Naive thymus-derived CD4-positive, alpha-beta T cell (primary cell): ENCODE measurements at regions of chr2 and their contacts with region 1.

Region 1: DNA sequence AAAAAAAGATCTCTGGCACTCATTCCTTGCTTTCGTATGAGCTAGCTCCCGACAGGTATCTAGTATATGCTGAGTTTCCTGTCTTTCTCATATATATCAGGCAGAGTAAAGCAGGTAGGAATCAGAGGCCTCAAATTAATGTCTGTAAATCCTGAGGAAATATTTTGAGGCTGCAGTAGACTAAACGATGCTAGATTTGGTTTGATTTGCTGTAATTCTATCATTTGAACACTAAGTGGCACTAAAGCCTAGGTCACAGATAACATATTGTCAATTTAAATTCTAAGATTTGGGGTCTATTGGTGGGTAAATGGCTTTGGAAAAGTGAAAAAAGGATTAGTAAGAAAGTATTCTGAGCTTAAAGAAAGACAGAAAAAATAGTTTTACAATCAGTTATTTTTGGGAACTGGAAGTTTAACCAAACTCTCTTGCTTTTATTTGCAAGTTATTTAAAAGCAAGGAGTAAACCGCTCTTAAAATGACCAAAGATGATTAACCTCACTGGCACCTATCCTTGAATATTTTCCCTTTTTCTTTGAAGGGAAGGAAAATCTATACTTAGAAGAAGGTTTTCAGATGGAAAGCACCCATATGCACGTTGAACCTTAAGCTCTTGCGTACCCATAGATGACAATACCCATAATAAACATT is 37.6 kb upstream of the SLC4A10 start:
- DNase-seq: peak in 6 of 9 donors; percentile 3 to 30 (median 18)
- ATAC-seq: peak; percentile 44
- H3K4me3 ChIP-seq: no peak overlapping the region
- H3K4me3 Mint-ChIP-seq: no peak overlapping the region
- H3K27ac ChIP-seq: no peak overlapping the region
- H3K27ac Mint-ChIP-seq: no peak overlapping the region
- H3K4me1 ChIP-seq: no peaks in the 10 kb centered on the region
- H3K4me1 Mint-ChIP-seq: peaks cover 0 to 3% (median 0%) of the 10 kb centered on the region in 7 donors
- H3K27me3 ChIP-seq: no peaks in the 10 kb centered on the region
- H3K27me3 Mint-ChIP-seq: peaks cover 0 to 27% (median 5%) of the 10 kb centered on the region in 5 donors

Region 2: GRCh38 chr2:159946326-159946999 is 1640.2 kb before region 1 on chr2:
- CTCF ChIA-PET with region 1: no interaction called
- POLR2A ChIA-PET with region 1: no interaction called
- intact Hi-C with region 1: no loop called
- DNase-seq: no peak
- ATAC-seq: no peak
- H3K4me3 ChIP-seq: no peak overlapping the region
- H3K4me3 Mint-ChIP-seq: no peak overlapping the region
- H3K27ac ChIP-seq: no peak overlapping the region
- H3K27ac Mint-ChIP-seq: no peak overlapping the region
- H3K4me1 ChIP-seq: no peaks in the 10 kb centered on the region
- H3K4me1 Mint-ChIP-seq: no peaks in the 10 kb centered on the region
- H3K27me3 ChIP-seq: no peaks in the 10 kb centered on the region
- H3K27me3 Mint-ChIP-seq: peaks cover 5 to 13% (median 11%) of the 10 kb centered on the region in 5 donors

Region 3: GRCh38 chr2:160721089-160722040 is 865.3 kb before region 1 on chr2:
- CTCF ChIA-PET with region 1: no interaction called
- POLR2A ChIA-PET with region 1: no interaction called
- intact Hi-C with region 1: no loop called
- DNase-seq: no peak
- ATAC-seq: no peak
- H3K4me3 ChIP-seq: no peak overlapping the region
- H3K4me3 Mint-ChIP-seq: no peak overlapping the region
- H3K27ac ChIP-seq: no peak overlapping the region
- H3K27ac Mint-ChIP-seq: no peak overlapping the region
- H3K4me1 ChIP-seq: no peaks in the 10 kb centered on the region
- H3K4me1 Mint-ChIP-seq: peaks cover 0 to 3% (median 0%) of the 10 kb centered on the region in 7 donors
- H3K27me3 ChIP-seq: no peaks in the 10 kb centered on the region
- H3K27me3 Mint-ChIP-seq: peaks cover 0 to 4% (median 0%) of the 10 kb centered on the region in 5 donors

Region 4: GRCh38 chr2:161946489-161947107 is 360.0 kb after region 1 on chr2:
- CTCF ChIA-PET with region 1: interaction called, 33 read pairs
- POLR2A ChIA-PET with region 1: no interaction called
- intact Hi-C with region 1: loop called (anchors 1 kb)
- DNase-seq: peak in 4 of 9 donors; percentile 18 to 38 (median 28)
- ATAC-seq: no peak
- H3K4me3 ChIP-seq: no peak overlapping the region
- H3K4me3 Mint-ChIP-seq: no peak overlapping the region
- H3K27ac ChIP-seq: no peak overlapping the region
- H3K27ac Mint-ChIP-seq: no peak overlapping the region
- H3K4me1 ChIP-seq: peaks cover 0 to 9% of the 10 kb centered on the region in 2 donors
- H3K4me1 Mint-ChIP-seq: peaks cover 0 to 36% (median 3%) of the 10 kb centered on the region in 7 donors
- H3K27me3 ChIP-seq: no peaks in the 10 kb centered on the region
- H3K27me3 Mint-ChIP-seq: peaks cover 0 to 20% (median 0%) of the 10 kb centered on the region in 5 donors

Region 5: GRCh38 chr2:162007447-162008040 is 420.9 kb after region 1 on chr2:
- CTCF ChIA-PET with region 1: no interaction called
- POLR2A ChIA-PET with region 1: no interaction called
- intact Hi-C with region 1: loop called in 1 of 2 experiments (anchors 2 kb)
- DNase-seq: peak in 5 of 9 donors; percentile 32 to 54 (median 41)
- ATAC-seq: no peak
- H3K4me3 ChIP-seq: no peak overlapping the region
- H3K4me3 Mint-ChIP-seq: no peak overlapping the region
- H3K27ac ChIP-seq: no peak overlapping the region
- H3K27ac Mint-ChIP-seq: peak overlapping the region in 7 of 9 donors; percentile 23 to 86 (median 47)
- H3K4me1 ChIP-seq: peaks cover 18 to 40% of the 10 kb centered on the region in 2 donors
- H3K4me1 Mint-ChIP-seq: peaks cover 18 to 64% (median 52%) of the 10 kb centered on the region in 7 donors
- H3K27me3 ChIP-seq: no peaks in the 10 kb centered on the region
- H3K27me3 Mint-ChIP-seq: no peaks in the 10 kb centered on the region

Region 6: DNA sequence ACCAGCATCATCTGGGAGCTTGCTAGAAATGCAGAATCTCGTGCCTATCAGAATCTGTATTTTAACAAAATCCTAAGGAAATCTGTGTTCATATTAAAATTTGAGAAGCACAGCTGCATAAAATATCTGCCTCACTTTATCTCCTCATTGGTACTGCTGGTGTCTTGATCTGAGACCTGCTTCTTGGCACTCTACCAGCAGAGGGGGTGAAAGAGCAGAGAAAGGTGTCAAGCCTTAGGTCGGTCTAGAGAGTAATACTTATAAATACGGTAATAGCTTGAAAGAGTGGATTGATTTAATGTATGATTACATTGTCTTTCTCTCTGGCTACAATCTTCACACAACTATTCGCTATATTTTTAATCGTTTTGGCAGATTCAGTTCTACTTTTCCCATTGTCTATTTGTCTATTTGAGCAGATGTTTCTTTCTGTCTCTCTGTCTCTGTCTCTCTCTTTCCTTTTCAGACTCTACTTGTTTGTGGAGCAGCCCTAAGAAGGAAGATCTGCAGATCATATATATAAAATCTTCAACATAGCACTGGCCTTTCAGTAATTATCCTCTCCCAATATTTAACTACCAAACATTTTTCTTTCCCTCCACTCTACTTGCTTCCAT is 567.1 kb after region 1 on chr2:
- CTCF ChIA-PET with region 1: interaction called, 4 read pairs
- POLR2A ChIA-PET with region 1: no interaction called
- intact Hi-C with region 1: loop called (anchors 1 to 10 kb)
- DNase-seq: peak in 8 of 9 donors; percentile 11 to 57 (median 46)
- ATAC-seq: peak; percentile 90
- H3K4me3 ChIP-seq: no peak overlapping the region
- H3K4me3 Mint-ChIP-seq: peak overlapping the region in 8 of 10 donors; percentile 3 to 71 (median 41)
- H3K27ac ChIP-seq: no peak overlapping the region
- H3K27ac Mint-ChIP-seq: no peak overlapping the region
- H3K4me1 ChIP-seq: no peaks in the 10 kb centered on the region
- H3K4me1 Mint-ChIP-seq: peaks cover 0 to 7% (median 5%) of the 10 kb centered on the region in 7 donors
- H3K27me3 ChIP-seq: no peaks in the 10 kb centered on the region
- H3K27me3 Mint-ChIP-seq: peaks cover 24 to 60% (median 42%) of the 10 kb centered on the region in 5 donors

Region 7: GRCh38 chr2:162221064-162221463 is 634.4 kb after region 1 on chr2:
- CTCF ChIA-PET with region 1: no interaction called
- POLR2A ChIA-PET with region 1: no interaction called
- intact Hi-C with region 1: loop called in 1 of 2 experiments (anchors 2 kb)
- DNase-seq: peak in 8 of 9 donors; percentile 5 to 62 (median 28)
- ATAC-seq: peak; percentile 83
- H3K4me3 ChIP-seq: no peak overlapping the region
- H3K4me3 Mint-ChIP-seq: no peak overlapping the region
- H3K27ac ChIP-seq: no peak overlapping the region
- H3K27ac Mint-ChIP-seq: no peak overlapping the region
- H3K4me1 ChIP-seq: no peaks in the 10 kb centered on the region
- H3K4me1 Mint-ChIP-seq: peaks cover 0 to 5% (median 0%) of the 10 kb centered on the region in 7 donors
- H3K27me3 ChIP-seq: no peaks in the 10 kb centered on the region
- H3K27me3 Mint-ChIP-seq: peaks cover 32 to 48% (median 39%) of the 10 kb centered on the region in 5 donors

Region 8: GRCh38 chr2:162301151-162301804 is 714.6 kb after region 1 on chr2:
- CTCF ChIA-PET with region 1: interaction called, 6 read pairs
- POLR2A ChIA-PET with region 1: no interaction called
- intact Hi-C with region 1: loop called (anchors 1 kb)
- DNase-seq: peak in 8 of 9 donors; percentile 26 to 57 (median 53)
- ATAC-seq: peak; percentile 91
- H3K4me3 ChIP-seq: no peak overlapping the region
- H3K4me3 Mint-ChIP-seq: no peak overlapping the region
- H3K27ac ChIP-seq: no peak overlapping the region
- H3K27ac Mint-ChIP-seq: peak overlapping the region in 1 of 9 donors; percentile 43
- H3K4me1 ChIP-seq: peaks cover 0 to 5% of the 10 kb centered on the region in 2 donors
- H3K4me1 Mint-ChIP-seq: peaks cover 0 to 7% (median 0%) of the 10 kb centered on the region in 7 donors
- H3K27me3 ChIP-seq: no peaks in the 10 kb centered on the region
- H3K27me3 Mint-ChIP-seq: no peaks in the 10 kb centered on the region

Region 9: DNA sequence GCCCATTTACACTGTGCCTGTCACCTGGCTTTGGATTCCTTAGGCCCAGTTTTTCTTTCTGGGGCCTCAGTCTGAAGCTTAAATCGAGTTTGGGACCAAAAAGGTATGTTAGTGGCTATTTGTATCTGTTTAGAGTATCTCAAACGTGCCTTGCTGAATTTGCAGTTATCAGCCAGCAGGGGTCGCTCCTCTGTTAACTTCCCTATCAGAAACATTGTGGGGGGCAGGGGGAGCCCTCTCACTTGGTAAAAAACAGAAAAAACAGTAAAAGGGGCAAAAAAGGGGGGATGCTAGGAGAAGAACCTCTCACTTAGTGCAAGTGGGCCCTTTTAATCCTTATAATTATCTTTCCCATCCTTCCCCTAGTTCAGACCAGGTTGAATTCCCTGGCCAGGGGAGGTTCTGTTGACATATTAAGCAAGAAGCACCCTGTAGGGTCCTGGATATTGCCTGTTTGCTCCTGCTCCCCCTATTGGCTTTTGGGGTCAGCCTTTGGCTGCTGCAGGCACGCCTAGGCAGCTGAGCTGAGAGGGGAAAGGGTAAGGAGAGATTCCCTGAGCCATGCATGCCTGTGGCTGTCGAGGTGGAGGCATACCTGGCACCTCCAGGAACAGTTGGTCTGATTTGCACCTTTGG is 740.6 kb after region 1 on chr2:
- CTCF ChIA-PET with region 1: no interaction called
- POLR2A ChIA-PET with region 1: no interaction called
- intact Hi-C with region 1: no loop called
- DNase-seq: peak in 4 of 9 donors; percentile 17 to 30 (median 24)
- ATAC-seq: no peak
- H3K4me3 ChIP-seq: no peak overlapping the region
- H3K4me3 Mint-ChIP-seq: no peak overlapping the region
- H3K27ac ChIP-seq: no peak overlapping the region
- H3K27ac Mint-ChIP-seq: peak overlapping the region in 1 of 9 donors; percentile 26
- H3K4me1 ChIP-seq: no peaks in the 10 kb centered on the region
- H3K4me1 Mint-ChIP-seq: peaks cover 0 to 16% (median 0%) of the 10 kb centered on the region in 7 donors
- H3K27me3 ChIP-seq: no peaks in the 10 kb centered on the region
- H3K27me3 Mint-ChIP-seq: no peaks in the 10 kb centered on the region